ENCODE measurements at regions of chr6 and their contacts with region 1.

Region 1: GRCh38 chr6:138428944-138429598 is 25.0 kb downstream of the HEBP2 start:
- DNase-seq: peak in 2 of 9 experiments; percentile 59 to 65
- ATAC-seq: peak; percentile 59
- H3K4me3 ChIP-seq: no peak overlapping the region
- H3K4me3 Mint-ChIP-seq: no peak overlapping the region
- H3K27ac ChIP-seq: no peak overlapping the region
- H3K27ac Mint-ChIP-seq: no peak overlapping the region
- H3K4me1 ChIP-seq: no peaks in the 10 kb centered on the region
- H3K4me1 Mint-ChIP-seq: peaks cover 1% of the 10 kb centered on the region
- H3K27me3 ChIP-seq: no peaks in the 10 kb centered on the region
- H3K27me3 Mint-ChIP-seq: peaks cover 9% of the 10 kb centered on the region
- CTCF ChIP-seq: peak; percentile 88

Region 2: GRCh38 chr6:138357928-138358327 is 71.1 kb before region 1 on chr6:
- CTCF ChIA-PET with region 1: no interaction called
- POLR2A ChIA-PET with region 1: no interaction called
- intact Hi-C with region 1: no loop called
- DNase-seq: no peak
- ATAC-seq: no peak
- H3K4me3 ChIP-seq: no peak overlapping the region
- H3K4me3 Mint-ChIP-seq: no peak overlapping the region
- H3K27ac ChIP-seq: no peak overlapping the region
- H3K27ac Mint-ChIP-seq: no peak overlapping the region
- H3K4me1 ChIP-seq: no peaks in the 10 kb centered on the region
- H3K4me1 Mint-ChIP-seq: no peaks in the 10 kb centered on the region
- H3K27me3 ChIP-seq: no peaks in the 10 kb centered on the region
- H3K27me3 Mint-ChIP-seq: peaks cover 9% of the 10 kb centered on the region
- CTCF ChIP-seq: no peak

Region 3: DNA sequence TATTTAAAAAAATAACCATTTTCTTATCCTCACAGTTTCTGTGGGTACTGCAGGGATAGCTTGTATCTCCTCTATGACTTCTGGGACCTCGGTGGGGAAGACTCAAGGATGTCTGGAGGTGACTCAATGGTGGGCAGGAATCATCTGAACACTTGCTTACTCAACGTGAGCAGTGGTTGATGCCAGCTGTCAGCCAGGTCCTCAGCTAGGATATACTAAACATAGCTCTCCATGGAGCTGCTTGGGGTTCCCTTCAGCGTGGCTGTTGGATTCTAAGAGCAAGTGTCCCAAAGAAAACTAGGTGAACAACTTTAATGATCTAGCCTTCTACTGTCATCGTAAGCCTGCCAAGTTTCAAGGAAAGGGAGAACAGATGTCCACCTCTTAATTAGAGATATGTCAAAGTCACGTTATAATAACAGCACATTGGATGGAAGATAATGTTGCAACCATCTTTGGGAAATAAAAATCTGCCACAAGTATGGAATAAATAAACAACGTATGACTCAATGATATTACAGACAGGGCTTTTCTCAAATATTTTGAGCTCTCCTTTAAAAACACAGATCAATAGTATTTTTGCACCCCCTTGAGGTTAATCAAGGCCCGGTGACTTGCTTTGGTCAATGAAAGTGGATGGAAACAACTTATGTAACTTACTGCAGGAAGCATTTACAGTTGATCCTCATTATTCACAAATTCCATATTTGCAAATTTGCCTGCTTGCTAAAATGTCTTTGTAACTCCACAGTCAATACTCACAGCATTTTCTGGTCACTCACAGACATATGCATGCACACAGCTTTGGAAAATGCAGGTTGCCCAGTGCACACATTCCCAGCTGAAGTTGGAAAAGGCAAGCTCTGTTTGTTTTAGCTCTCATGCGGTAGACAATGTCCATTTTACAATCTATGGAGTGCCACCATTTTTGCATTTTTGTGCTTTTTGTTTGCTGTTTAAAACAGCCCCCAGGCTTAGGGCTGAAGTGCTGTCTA is 31.6 kb before region 1 on chr6:
- CTCF ChIA-PET with region 1: no interaction called
- POLR2A ChIA-PET with region 1: no interaction called
- intact Hi-C with region 1: no loop called
- DNase-seq: no peak
- ATAC-seq: no peak
- H3K4me3 ChIP-seq: no peak overlapping the region
- H3K4me3 Mint-ChIP-seq: no peak overlapping the region
- H3K27ac ChIP-seq: no peak overlapping the region
- H3K27ac Mint-ChIP-seq: no peak overlapping the region
- H3K4me1 ChIP-seq: no peaks in the 10 kb centered on the region
- H3K4me1 Mint-ChIP-seq: no peaks in the 10 kb centered on the region
- H3K27me3 ChIP-seq: no peaks in the 10 kb centered on the region
- H3K27me3 Mint-ChIP-seq: no peaks in the 10 kb centered on the region
- CTCF ChIP-seq: no peak

Region 4: GRCh38 chr6:138450445-138450844 is 21.4 kb after region 1 on chr6:
- CTCF ChIA-PET with region 1: interaction called, 10 read pairs
- POLR2A ChIA-PET with region 1: interaction called, 4 read pairs
- intact Hi-C with region 1: no loop called
- DNase-seq: no peak
- ATAC-seq: no peak
- H3K4me3 ChIP-seq: no peak overlapping the region
- H3K4me3 Mint-ChIP-seq: no peak overlapping the region
- H3K27ac ChIP-seq: no peak overlapping the region
- H3K27ac Mint-ChIP-seq: no peak overlapping the region
- H3K4me1 ChIP-seq: peaks cover 7% of the 10 kb centered on the region
- H3K4me1 Mint-ChIP-seq: peaks cover 8% of the 10 kb centered on the region
- H3K27me3 ChIP-seq: no peaks in the 10 kb centered on the region
- H3K27me3 Mint-ChIP-seq: peaks cover 3% of the 10 kb centered on the region
- CTCF ChIP-seq: no peak

Region 5: GRCh38 chr6:138509371-138509770 is 80.3 kb after region 1 on chr6:
- CTCF ChIA-PET with region 1: interaction called, 200 read pairs
- POLR2A ChIA-PET with region 1: no interaction called
- intact Hi-C with region 1: loop called (anchors 1 kb)
- DNase-seq: peak in 6 of 9 experiments; percentile 5 to 59 (median 32)
- ATAC-seq: no peak
- H3K4me3 ChIP-seq: no peak overlapping the region
- H3K4me3 Mint-ChIP-seq: no peak overlapping the region
- H3K27ac ChIP-seq: no peak overlapping the region
- H3K27ac Mint-ChIP-seq: no peak overlapping the region
- H3K4me1 ChIP-seq: no peaks in the 10 kb centered on the region
- H3K4me1 Mint-ChIP-seq: peaks cover 4% of the 10 kb centered on the region
- H3K27me3 ChIP-seq: peaks cover 0 to 2% of the 10 kb centered on the region in 2 experiments
- H3K27me3 Mint-ChIP-seq: no peaks in the 10 kb centered on the region
- CTCF ChIP-seq: peak; percentile 52

Region 6: GRCh38 chr6:138517635-138518034 is 88.6 kb after region 1 on chr6:
- CTCF ChIA-PET with region 1: interaction called, 200 read pairs
- POLR2A ChIA-PET with region 1: no interaction called
- intact Hi-C with region 1: loop called (anchors 1 kb)
- DNase-seq: peak; percentile 10 to 74 (median 57)
- ATAC-seq: peak; percentile 74
- H3K4me3 ChIP-seq: no peak overlapping the region
- H3K4me3 Mint-ChIP-seq: no peak overlapping the region
- H3K27ac ChIP-seq: no peak overlapping the region
- H3K27ac Mint-ChIP-seq: no peak overlapping the region
- H3K4me1 ChIP-seq: no peaks in the 10 kb centered on the region
- H3K4me1 Mint-ChIP-seq: peaks cover 7% of the 10 kb centered on the region
- H3K27me3 ChIP-seq: no peaks in the 10 kb centered on the region
- H3K27me3 Mint-ChIP-seq: peaks cover 8% of the 10 kb centered on the region
- CTCF ChIP-seq: peak; percentile 84

Region 7: GRCh38 chr6:138526822-138527235 is 97.8 kb after region 1 on chr6:
- CTCF ChIA-PET with region 1: interaction called, 15 read pairs
- POLR2A ChIA-PET with region 1: no interaction called
- intact Hi-C with region 1: no loop called
- DNase-seq: no peak
- ATAC-seq: no peak
- H3K4me3 ChIP-seq: no peak overlapping the region
- H3K4me3 Mint-ChIP-seq: no peak overlapping the region
- H3K27ac ChIP-seq: no peak overlapping the region
- H3K27ac Mint-ChIP-seq: no peak overlapping the region
- H3K4me1 ChIP-seq: no peaks in the 10 kb centered on the region
- H3K4me1 Mint-ChIP-seq: no peaks in the 10 kb centered on the region
- H3K27me3 ChIP-seq: no peaks in the 10 kb centered on the region
- H3K27me3 Mint-ChIP-seq: peaks cover 4% of the 10 kb centered on the region
- CTCF ChIP-seq: no peak

Region 8: GRCh38 chr6:138588805-138589434 is 159.8 kb after region 1 on chr6:
- CTCF ChIA-PET with region 1: interaction called, 4 read pairs
- POLR2A ChIA-PET with region 1: no interaction called
- intact Hi-C with region 1: loop called (anchors 1 to 2 kb)
- DNase-seq: peak in 8 of 9 experiments; percentile 24 to 74 (median 50)
- ATAC-seq: peak; percentile 67
- H3K4me3 ChIP-seq: no peak overlapping the region
- H3K4me3 Mint-ChIP-seq: no peak overlapping the region
- H3K27ac ChIP-seq: no peak overlapping the region
- H3K27ac Mint-ChIP-seq: no peak overlapping the region
- H3K4me1 ChIP-seq: peaks cover 10% of the 10 kb centered on the region
- H3K4me1 Mint-ChIP-seq: peaks cover 19% of the 10 kb centered on the region
- H3K27me3 ChIP-seq: no peaks in the 10 kb centered on the region
- H3K27me3 Mint-ChIP-seq: no peaks in the 10 kb centered on the region
- CTCF ChIP-seq: peak; percentile 93

Region 9: GRCh38 chr6:138765896-138766655 is 337.0 kb after region 1 on chr6:
- CTCF ChIA-PET with region 1: interaction called, 8 read pairs
- POLR2A ChIA-PET with region 1: no interaction called
- intact Hi-C with region 1: loop called (anchors 2 to 5 kb)
- DNase-seq: peak in 2 of 9 experiments; percentile 34 to 52
- ATAC-seq: no peak
- H3K4me3 ChIP-seq: no peak overlapping the region
- H3K4me3 Mint-ChIP-seq: no peak overlapping the region
- H3K27ac ChIP-seq: no peak overlapping the region
- H3K27ac Mint-ChIP-seq: no peak overlapping the region
- H3K4me1 ChIP-seq: no peaks in the 10 kb centered on the region
- H3K4me1 Mint-ChIP-seq: no peaks in the 10 kb centered on the region
- H3K27me3 ChIP-seq: no peaks in the 10 kb centered on the region
- H3K27me3 Mint-ChIP-seq: no peaks in the 10 kb centered on the region
- CTCF ChIP-seq: peak; percentile 86

Measured in CD8-positive, alpha-beta T cell (primary cell).